ENCODE measurements at regions of chr12 and their contacts with region 1.

Region 1: DNA sequence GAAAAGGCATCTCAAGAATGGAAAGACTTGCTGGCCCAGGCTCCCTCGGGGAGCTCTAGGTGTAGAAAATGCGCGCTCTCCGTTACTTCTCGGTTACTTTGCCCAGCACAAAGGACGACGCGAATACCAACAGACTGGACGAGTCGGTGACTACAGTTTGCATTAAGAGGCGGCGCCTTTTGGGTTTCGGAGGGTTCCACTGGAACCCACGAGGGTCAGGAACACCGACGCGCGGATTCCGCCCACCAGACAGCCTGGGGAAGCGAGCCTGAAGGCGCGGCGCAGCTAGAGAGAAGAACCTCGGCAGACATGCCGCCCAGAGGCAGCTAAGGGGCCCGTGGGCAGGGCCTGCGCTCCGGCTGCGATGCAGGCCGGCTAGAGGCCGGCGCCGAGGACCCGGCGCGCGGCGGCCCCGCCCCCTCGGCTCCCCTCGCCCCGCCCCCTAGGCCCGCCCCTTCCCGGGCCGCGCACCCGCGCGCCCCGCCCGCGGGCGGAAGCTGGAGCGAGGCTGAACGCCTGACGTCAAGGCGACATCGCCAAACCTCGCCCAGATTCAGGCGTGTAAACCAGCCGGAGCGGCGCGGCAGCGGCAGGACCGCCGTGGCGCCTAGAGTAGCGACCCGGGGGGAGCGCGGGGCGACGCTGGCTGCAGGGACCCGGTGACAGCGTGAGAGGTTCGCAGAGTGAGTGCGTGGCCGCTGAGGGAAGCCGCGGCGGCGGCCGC is at the start of gene RAP1B:
- H3K4me3 ChIP-seq: peak within 1 kb of the TSS; percentile 86
- H3K27ac ChIP-seq: peak within 1 kb of the TSS; percentile 91
- H3K4me1 ChIP-seq: peaks cover 10% of the 10 kb centered on the region
- CTCF ChIP-seq: no peak

Region 2: DNA sequence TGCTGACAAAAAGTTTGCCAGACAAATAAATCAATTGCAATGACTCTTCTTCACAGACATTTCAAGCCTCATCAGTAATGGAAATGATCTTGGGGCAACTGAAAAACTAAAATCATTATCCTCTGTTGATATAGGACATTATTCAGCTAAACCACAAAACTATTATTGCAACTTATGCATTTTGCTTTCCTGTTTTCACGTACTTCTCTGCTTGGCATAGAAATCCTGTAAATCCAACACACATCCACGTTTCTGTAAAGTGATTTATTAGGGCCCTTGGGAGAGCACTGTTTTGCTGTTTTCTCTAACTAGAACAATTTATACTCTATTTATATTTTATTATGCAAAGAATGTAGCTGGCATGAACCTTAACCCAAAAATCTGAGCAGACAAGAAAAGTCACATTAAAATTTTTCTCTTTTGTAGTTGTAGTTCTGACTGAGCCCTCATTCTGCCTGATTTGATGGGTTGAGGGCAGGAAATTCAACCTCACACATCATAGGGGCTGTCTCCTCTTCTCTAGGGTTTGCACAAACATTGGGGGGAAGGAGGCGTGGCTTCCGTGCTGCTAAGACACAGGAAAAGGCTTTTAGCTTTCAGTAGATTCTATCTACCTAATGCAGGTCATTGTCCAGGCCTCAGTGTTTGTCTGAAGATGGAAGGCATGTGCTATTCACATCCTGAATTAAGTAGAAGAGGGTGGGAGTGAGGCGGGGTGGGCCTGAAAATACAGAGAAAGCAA is 64.7 kb after region 1 on chr12:
- CTCF ChIA-PET with region 1: no interaction called
- POLR2A ChIA-PET with region 1: interaction called, 15 read pairs
- H3K4me3 ChIP-seq: no peak overlapping the region
- H3K27ac ChIP-seq: no peak overlapping the region
- H3K4me1 ChIP-seq: no peaks in the 10 kb centered on the region
- CTCF ChIP-seq: no peak

Measured in HEK293 (cell line).